Upper lobe of right lung (tissue), 1 donor: ENCODE measurements at regions of chr1 and their contacts with region 1.

Region 1: DNA sequence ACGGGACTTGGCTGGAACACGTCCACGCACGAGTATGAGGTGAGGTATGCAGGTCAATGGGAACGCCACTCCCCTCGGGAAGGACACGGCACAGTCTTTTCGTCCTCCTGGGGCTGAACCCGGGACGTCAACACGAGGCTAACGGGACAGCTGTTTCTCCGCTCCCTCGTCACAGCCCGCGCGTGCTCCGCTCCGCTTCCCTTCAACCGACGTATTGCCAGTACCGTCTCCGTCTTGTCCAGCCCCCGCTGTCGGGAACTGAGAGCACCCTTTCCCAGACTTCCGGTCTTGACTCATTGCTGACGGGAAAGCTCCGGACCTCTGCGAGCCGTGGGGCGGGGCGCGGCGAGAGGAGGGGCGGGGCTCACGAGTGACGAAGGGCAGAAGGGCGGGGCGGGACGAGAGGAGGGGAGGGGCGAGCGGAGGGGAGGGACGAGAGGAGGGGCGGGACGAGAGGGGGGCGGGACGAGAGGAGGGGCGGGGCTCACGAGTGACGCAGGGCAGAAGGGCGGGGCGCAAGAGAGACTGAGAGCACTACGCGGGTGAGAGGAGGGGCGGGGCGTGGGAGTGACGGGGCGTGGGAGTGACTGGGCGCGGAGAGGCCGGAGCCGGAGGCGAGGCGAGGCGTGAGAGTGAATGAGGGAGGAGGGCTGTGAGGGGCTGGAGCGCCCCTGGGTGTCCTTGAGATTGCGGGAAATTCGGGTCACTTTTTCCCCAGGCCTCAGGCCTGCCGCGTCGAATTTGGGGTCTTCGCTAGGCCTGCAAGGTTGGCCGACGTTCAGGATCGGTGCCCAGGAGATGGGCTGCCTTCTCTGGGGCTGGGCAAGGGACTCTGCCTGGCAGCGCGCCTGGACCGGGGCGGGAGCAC is 22.2 kb upstream of the CFAP126 start:
- DNase-seq: peak; percentile 99
- ATAC-seq: peak; percentile 96
- H3K4me3 ChIP-seq: peak overlapping the region; percentile 61
- H3K27ac ChIP-seq: peak overlapping the region; percentile 98
- H3K4me1 ChIP-seq: peaks cover 11% of the 10 kb centered on the region
- H3K27me3 ChIP-seq: no peaks in the 10 kb centered on the region
- CTCF ChIP-seq: no peak

Region 2: DNA sequence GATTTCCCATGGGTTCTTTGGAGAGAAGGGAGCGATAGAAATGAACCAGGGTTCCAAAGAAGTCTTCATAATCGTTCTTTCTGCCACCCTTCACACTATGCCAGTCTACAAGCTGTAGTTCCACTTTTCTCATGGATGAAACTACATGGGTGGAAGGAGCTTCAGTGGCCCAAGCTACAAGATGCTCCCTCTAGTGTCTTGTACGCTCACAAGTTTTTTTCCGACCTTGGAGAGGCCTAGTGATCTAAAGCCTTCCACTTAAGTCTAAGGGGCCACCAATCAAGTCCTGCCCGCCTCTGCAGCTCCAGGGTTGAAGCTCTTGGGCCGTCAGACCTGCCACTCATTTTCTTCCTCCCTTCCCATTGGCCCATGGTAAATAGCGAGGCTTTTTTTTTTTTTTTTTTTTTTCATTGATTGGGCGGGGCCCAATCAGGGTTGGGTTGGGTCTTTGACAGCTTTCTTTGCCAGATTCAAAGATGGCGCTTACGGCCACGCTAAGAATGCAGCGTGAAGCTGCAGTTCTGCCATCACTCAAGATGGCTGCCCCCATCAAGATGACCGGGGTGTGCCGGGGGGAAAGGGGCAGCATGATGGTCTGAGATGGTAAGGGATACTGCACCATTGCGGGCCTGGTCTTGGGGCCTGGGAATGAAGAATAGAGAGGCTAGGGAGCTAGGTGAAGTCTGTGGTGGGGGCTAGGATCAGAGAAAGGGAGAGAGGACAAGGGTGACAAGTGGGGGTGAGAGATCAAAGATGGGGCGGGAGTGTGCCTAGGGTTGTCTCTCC is 164.2 kb before region 1 on chr1 and contains the start of gene TOMM40L:
- intact Hi-C with region 1: loop called (anchors 10 kb)
- DNase-seq: peak; percentile 91
- ATAC-seq: peak; percentile 94
- H3K4me3 ChIP-seq: peak within 1 kb of the TSS; percentile 75
- H3K27ac ChIP-seq: peak within 1 kb of the TSS; percentile 66
- H3K4me1 ChIP-seq: peaks cover 21% of the 10 kb centered on the region
- H3K27me3 ChIP-seq: no peaks in the 10 kb centered on the region
- CTCF ChIP-seq: peak; percentile 55
- total RNA-seq, gene TOMM40L: 11.6 TPM

Region 3: DNA sequence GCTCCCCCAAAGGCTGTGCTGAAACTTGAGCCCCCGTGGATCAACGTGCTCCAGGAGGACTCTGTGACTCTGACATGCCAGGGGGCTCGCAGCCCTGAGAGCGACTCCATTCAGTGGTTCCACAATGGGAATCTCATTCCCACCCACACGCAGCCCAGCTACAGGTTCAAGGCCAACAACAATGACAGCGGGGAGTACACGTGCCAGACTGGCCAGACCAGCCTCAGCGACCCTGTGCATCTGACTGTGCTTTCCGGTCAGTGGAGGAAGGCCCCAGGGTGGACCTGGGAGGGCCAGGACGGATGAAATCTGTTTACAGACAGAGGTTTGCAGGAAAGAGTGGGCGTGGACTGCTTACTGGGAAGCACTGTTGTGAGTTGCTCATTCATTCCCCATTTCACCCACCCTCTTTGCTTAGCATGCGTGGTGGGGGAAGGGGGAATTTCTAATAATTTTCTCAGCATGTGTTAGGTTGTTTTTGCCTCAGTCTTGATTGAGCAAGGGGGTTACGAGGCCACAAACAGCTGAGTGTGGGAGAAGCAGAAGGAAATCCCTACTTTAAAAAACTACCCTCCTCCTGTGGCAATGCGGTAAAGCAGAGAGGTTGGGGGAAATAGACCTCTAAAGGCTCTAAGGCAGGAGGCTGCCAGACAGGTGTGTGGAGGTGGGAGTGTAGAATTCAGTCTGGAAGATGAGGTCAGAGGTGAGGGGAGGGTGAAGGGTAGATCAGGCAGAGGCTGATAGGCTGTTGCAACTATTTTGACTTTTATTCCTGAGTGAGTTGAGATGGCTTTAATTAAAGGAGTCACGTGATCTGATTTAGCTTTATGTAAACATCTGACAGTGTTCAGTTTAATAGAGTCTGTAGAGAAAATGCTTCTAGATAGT is 116.7 kb after region 1 on chr1:
- intact Hi-C with region 1: no loop called
- DNase-seq: peak; percentile 76
- ATAC-seq: peak; percentile 88
- H3K4me3 ChIP-seq: peak overlapping the region; percentile 42
- H3K27ac ChIP-seq: peak overlapping the region; percentile 65
- H3K4me1 ChIP-seq: peaks cover 11% of the 10 kb centered on the region
- H3K27me3 ChIP-seq: no peaks in the 10 kb centered on the region
- CTCF ChIP-seq: no peak